Activated CD4-positive, alpha-beta memory T cell treated with anti-CD3 and anti-CD28 coated beads, Interleukin-2, amount 10 ng/mL, durations not matched to agents 7 days and 5 days (primary cell): ENCODE measurements at regions of chr7 and their contacts with region 1.

Region 1: GRCh38 chr7:92447345-92448204 is at the start of gene GATAD1:
- DNase-seq: peak; percentile 84
- H3K4me3 Mint-ChIP-seq: peak within 1 kb of the TSS; percentile 86
- H3K27ac Mint-ChIP-seq: peak within 1 kb of the TSS; percentile 88
- H3K4me1 Mint-ChIP-seq: peaks cover 13% of the 10 kb centered on the region
- H3K27me3 Mint-ChIP-seq: peaks cover 1% of the 10 kb centered on the region
- total RNA-seq, gene GATAD1: 17.4 to 18.5 TPM

Region 2: GRCh38 chr7:91880413-91881241 is 566.9 kb before region 1 on chr7 and contains the start of gene MTERF1:
- CTCF ChIA-PET with region 1: interaction called, 13 read pairs
- POLR2A ChIA-PET with region 1: interaction called, 7 read pairs
- DNase-seq: peak; percentile 93
- H3K4me3 Mint-ChIP-seq: peak within 1 kb of the TSS; percentile 91
- H3K27ac Mint-ChIP-seq: peak within 1 kb of the TSS; percentile 88
- H3K4me1 Mint-ChIP-seq: peaks cover 30% of the 10 kb centered on the region
- H3K27me3 Mint-ChIP-seq: no peaks in the 10 kb centered on the region
- total RNA-seq, gene MTERF1: 15.4 to 15.6 TPM

Region 3: GRCh38 chr7:92134271-92135051 is 313.1 kb before region 1 on chr7 and contains the start of gene CYP51A1:
- CTCF ChIA-PET with region 1: interaction called, 9 read pairs
- POLR2A ChIA-PET with region 1: interaction called, 28 read pairs
- DNase-seq: peak; percentile 93
- H3K4me3 Mint-ChIP-seq: peak within 1 kb of the TSS; percentile 90
- H3K27ac Mint-ChIP-seq: peak within 1 kb of the TSS; percentile 95
- H3K4me1 Mint-ChIP-seq: peaks cover 41% of the 10 kb centered on the region
- H3K27me3 Mint-ChIP-seq: peaks cover 1% of the 10 kb centered on the region
- total RNA-seq, gene CYP51A1: 94.3 to 97.9 TPM

Region 4: DNA sequence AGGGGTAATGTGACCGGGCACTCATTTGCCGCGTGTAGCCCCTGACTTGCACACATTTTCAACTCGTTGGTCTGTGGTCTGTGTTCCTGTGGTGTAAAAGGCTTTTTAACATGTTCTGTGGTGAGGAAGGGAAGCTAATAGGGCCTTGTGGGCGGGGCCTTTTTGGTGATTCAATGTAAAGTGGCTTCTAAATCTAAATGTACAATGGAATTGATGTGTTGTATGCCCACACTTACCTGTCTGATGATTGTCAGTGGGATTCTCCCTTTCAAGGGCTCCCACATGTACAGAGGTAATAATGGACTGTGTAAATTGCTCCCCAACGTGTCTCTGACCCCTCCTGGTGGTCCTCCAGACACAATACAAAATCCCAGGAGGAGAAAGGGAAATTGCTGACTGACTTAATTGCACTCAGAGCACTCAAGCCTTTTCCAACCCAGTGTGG is 43.4 kb before region 1 on chr7:
- CTCF ChIA-PET with region 1: interaction called, 10 read pairs
- POLR2A ChIA-PET with region 1: no interaction called
- DNase-seq: peak; percentile 61
- H3K4me3 Mint-ChIP-seq: no peak overlapping the region
- H3K27ac Mint-ChIP-seq: no peak overlapping the region
- H3K4me1 Mint-ChIP-seq: peaks cover 15% of the 10 kb centered on the region
- H3K27me3 Mint-ChIP-seq: peaks cover 2% of the 10 kb centered on the region

Region 5: DNA sequence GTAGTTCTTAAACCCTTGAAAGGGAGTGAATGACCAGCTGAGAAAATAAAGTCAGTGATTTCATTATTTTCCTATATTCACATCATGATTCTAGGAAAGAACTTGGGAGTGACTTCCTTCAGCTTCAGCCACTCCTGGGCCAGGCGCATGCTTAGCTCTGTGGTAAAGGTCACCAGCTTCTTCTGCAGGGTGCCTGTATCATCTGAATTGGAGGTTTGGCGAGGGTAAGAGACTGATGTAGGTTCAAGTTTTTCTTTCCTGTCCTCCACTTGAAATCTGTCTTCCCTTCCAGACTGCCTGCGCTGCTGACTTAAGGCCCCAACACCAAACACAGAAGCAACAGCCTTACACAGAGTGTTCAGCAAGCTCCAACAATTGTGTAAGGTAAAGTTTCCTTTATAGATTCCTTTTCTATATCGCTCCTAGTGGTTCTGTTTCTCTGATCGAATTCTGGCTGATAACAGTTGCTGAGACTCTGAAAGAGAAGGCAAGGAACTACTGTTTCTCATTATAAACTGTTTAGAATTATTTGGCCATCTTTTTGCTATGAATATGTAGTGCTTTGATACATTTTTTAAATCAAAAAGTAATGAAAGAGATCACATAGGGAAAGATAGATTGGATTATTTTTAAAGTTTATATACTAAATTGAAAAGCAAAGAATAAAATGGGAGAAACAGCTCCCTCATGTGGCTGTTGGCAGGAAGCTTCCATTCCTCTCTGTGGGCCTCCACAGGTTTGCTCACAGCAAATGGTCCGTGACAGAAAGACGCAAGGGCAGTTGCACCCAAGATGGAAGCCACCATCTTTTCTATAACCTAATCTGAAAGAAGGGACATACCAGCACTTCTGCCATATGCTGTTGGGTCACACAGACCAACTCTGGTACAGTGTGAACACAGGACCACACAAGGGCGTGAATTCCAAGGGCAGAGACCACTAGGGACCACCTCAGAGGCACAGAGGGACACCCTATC is 13.7 kb after region 1 on chr7:
- CTCF ChIA-PET with region 1: interaction called, 28 read pairs
- POLR2A ChIA-PET with region 1: interaction called, 10 read pairs
- DNase-seq: peak; percentile 32
- H3K4me3 Mint-ChIP-seq: no peak overlapping the region
- H3K27ac Mint-ChIP-seq: no peak overlapping the region
- H3K4me1 Mint-ChIP-seq: peaks cover 2% of the 10 kb centered on the region
- H3K27me3 Mint-ChIP-seq: no peaks in the 10 kb centered on the region

Region 6: DNA sequence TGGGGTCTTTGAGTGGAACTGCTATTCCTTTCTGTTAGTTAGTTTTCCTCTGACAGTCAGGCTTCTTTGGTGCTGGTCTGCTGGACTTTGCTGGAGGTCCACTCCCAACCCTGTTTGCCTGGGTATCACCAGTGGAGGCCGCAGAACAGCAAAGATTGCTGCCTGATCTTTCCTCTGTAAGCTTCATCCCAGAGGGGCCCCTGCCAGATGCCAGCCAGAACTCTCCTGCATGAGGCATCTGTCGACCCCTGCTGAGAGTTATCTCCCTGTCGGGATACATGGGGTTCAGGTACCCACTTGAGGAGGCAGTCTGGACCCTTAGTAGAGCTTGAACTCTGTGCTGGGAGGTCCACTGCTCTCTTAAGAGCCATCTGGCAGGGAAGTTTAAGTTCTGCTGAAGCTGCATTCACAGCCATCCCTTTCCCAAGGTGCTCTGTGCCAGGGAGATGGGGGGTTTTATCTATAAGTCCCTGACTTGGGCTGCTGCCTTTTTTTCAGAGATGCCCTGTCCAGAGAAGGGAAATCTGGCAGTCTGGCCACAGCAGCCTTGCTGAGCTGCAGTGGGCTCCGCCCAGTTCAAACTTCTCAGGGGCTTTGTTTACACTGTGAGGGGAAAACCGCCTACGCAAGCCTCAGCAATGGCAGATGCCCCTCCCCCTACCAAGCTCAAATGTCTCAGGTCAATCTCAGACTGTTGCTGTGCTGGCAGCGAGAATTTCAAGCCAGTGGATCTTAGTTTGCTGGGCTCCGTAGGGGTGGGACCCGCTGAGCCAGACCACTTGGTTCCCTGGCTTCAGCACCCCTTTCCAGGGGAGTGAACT is 478.5 kb after region 1 on chr7:
- CTCF ChIA-PET with region 1: no interaction called
- POLR2A ChIA-PET with region 1: no interaction called
- DNase-seq: no peak
- H3K4me3 Mint-ChIP-seq: no peak overlapping the region
- H3K27ac Mint-ChIP-seq: no peak overlapping the region
- H3K4me1 Mint-ChIP-seq: no peaks in the 10 kb centered on the region
- H3K27me3 Mint-ChIP-seq: peaks cover 19% of the 10 kb centered on the region